Cardiac septum (tissue), 1 donor: ENCODE measurements at regions of chrX and their contacts with region 1.

Region 1: GRCh38 chrX:68828740-68829552 is at the start of gene EFNB1:
- DNase-seq: peak; percentile 94
- total RNA-seq, gene EFNB1: 27.9 TPM

Region 2: GRCh38 chrX:68894513-68895340 is 65.8 kb after region 1 on chrX:
- intact Hi-C with region 1: loop called (anchors 1 kb)
- DNase-seq: peak; percentile 87

Region 3: DNA sequence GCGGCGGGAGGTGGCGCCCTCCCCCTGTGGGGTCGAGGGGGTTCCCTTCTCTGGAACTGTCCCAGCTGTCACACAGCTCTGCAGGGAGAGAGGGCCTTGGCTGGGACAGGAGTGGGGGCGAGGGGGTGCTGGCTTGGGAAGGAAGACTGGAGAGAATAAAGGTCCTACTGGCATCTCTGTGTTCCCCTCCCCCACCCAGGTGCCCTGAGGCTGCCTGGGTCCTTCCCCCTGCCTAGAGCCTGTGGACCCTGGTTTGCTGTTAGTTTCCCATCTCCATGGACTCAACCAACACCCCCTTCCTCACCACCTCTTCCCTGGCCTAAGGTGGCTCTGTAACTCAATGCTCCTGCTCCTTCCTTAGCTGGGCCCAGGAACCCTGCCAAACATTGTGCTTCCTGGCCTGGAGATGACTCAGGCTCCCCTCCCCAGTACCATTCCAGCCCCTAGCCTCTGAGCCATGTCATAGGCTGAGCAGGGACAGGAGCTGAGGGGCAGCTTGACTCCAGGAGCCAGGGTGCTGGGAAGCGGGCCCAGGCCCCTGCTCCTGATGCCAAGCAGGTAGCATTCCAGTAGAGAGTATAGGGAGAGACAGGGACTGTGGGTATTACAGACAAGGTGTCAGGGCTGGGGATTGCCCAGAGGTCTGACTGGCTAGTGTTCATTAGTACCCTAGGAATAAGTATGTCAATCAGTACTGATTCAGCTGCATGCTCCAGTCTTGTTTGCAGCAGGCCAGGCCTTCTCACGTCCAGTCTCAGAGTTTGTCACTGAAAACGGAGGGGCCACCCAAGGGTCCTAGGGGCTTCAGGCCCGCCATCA is 100.6 kb after region 1 on chrX:
- intact Hi-C with region 1: loop called (anchors 5 kb)
- DNase-seq: peak; percentile 79

Region 4: DNA sequence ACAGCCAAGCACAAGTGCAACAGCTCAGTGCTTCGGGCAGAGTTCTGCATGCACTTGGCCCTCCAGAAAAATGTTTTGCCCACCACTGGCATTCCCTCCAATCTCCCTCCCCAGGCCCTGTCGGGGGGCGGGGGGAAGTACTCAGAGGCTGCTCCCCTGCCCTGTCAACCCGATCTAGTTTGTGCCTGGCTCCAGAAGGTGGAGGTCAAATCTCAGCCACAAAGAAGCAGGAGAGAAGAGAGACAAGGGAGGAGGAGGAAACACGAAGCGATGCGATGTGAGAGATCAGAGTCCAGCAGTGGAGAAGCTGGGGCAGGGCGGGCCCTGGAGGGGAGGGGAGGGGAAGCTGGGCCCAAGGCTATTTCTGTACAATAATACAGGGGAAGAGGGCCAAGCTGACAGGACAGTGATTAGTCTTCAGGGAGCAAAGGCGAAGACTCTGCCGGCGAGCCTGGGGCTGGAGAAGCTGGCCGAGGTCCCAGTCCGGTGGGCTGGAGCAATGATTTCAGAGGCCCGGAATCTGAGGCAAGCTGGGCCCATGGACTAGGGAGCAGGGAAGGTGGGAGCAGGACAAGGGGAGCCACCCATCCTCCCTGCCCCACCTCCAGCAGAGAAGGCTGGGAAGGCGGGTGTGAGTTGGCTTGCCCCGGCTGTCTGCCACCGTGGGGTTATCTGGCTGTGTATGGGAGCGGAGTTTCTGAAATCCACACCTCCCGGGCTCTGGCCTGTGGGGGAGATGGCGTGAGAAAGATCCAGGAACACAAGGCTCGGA is 167.0 kb after region 1 on chrX:
- intact Hi-C with region 1: loop called (anchors 5 kb)
- DNase-seq: peak; percentile 84

Region 5: GRCh38 chrX:69060631-69061408 is 231.9 kb after region 1 on chrX:
- intact Hi-C with region 1: loop called (anchors 2 kb)
- DNase-seq: peak; percentile 63

Region 6: GRCh38 chrX:69222103-69223090 is 393.5 kb after region 1 on chrX:
- intact Hi-C with region 1: loop called (anchors 1 kb)
- DNase-seq: peak; percentile 77